ENCODE measurements at regions of chr5 and their contacts with region 1.

Region 1: GRCh38 chr5:141960449-141961202 is 2.6 kb upstream of the PCDH12 start:
- DNase-seq: peak; percentile 69 to 83
- H3K4me3 ChIP-seq: no peak overlapping the region
- H3K27ac ChIP-seq: no peak overlapping the region
- H3K4me1 ChIP-seq: peaks cover 11% of the 10 kb centered on the region
- H3K27me3 ChIP-seq: no peaks in the 10 kb centered on the region
- CTCF ChIP-seq: peak; percentile 90

Region 2: GRCh38 chr5:141517880-141518617 is 442.6 kb before region 1 on chr5:
- CTCF ChIA-PET with region 1: interaction called, 20 read pairs
- POLR2A ChIA-PET with region 1: no interaction called
- intact Hi-C with region 1: no loop called
- DNase-seq: no peak
- H3K4me3 ChIP-seq: no peak overlapping the region
- H3K27ac ChIP-seq: no peak overlapping the region
- H3K4me1 ChIP-seq: peaks cover 43% of the 10 kb centered on the region
- H3K27me3 ChIP-seq: no peaks in the 10 kb centered on the region
- CTCF ChIP-seq: no peak

Region 3: DNA sequence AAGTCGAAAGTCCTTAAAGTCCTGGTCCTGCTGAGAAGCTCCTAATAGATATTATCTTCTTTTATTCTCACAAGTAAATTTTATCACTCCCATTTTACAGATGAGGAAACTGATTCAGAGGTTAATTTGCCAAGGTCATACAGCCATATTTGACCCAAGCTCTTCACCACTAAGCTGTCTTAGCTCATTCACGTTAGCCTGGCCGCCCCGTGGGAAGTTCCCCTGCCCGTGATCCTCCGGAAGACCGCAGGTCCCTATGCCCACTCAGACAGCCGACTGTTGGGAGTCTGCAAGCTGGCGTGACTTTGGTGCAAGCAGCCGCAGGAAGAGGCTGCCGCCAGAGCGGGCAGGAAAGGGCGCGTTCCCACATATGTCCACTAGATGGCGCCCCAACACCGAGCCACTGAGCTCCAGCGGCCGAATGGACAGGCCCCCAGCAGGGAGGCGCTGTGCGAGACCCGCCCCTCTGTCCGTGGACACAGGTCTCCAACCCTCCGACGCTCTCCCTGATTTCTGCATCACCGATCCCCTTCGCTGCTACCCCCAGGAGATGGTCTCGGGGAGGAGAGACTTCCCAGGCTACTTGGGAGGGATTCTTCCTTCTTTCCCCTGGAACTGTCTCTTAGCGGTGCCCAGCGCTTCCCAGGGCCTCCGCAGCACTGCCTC is 268.6 kb before region 1 on chr5:
- CTCF ChIA-PET with region 1: interaction called, 26 read pairs
- POLR2A ChIA-PET with region 1: no interaction called
- intact Hi-C with region 1: loop called (anchors 1 kb)
- DNase-seq: peak; percentile 71 to 89
- H3K4me3 ChIP-seq: peak overlapping the region; percentile 46; the same call in 1 of the 2 replicates
- H3K27ac ChIP-seq: no peak overlapping the region
- H3K4me1 ChIP-seq: peaks cover 48% of the 10 kb centered on the region
- H3K27me3 ChIP-seq: no peaks in the 10 kb centered on the region
- CTCF ChIP-seq: peak; percentile 93

Region 4: GRCh38 chr5:141757402-141757801 is 203.2 kb before region 1 on chr5:
- CTCF ChIA-PET with region 1: interaction called, 12 read pairs
- POLR2A ChIA-PET with region 1: no interaction called
- intact Hi-C with region 1: loop called (anchors 1 kb)
- DNase-seq: peak; percentile 64 to 75
- H3K4me3 ChIP-seq: no peak overlapping the region
- H3K27ac ChIP-seq: no peak overlapping the region
- H3K4me1 ChIP-seq: peaks cover 14% of the 10 kb centered on the region
- H3K27me3 ChIP-seq: no peaks in the 10 kb centered on the region
- CTCF ChIP-seq: peak; percentile 74

Region 5: DNA sequence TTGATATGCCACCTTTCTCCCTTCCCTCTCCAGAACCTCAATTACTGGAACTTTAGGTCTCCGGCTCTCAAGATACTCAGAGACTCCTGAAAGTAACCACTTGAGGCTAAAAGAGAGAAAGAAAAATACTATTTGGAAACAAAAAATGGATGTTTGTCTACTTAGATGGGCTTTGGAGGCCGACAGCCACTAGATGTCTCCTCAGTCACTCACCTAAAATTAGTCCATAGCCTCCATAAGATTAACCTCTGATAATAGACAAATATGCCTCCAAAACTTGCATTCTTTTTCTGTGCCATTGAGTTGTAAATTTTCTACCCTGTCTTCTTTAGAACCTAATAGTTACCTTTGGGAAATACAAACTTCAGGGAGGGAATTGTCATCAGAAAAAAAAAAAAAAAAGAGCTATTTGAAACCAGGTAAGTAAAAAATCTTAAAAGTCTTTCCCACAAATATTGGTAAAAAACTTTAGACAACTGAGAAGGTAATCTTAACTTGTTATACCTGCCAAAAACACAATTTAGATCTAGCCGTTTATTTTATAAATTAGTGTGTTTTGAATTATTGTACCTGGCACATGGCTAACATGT is 71.2 kb before region 1 on chr5:
- CTCF ChIA-PET with region 1: interaction called, 12 read pairs
- POLR2A ChIA-PET with region 1: no interaction called
- intact Hi-C with region 1: loop called (anchors 2 kb)
- DNase-seq: no peak
- H3K4me3 ChIP-seq: no peak overlapping the region
- H3K27ac ChIP-seq: no peak overlapping the region
- H3K4me1 ChIP-seq: no peaks in the 10 kb centered on the region
- H3K27me3 ChIP-seq: no peaks in the 10 kb centered on the region
- CTCF ChIP-seq: peak; percentile 59; the same call in 1 of the 2 replicates

Measured in PC-9 (cell line).